Activated naive CD4-positive, alpha-beta T cell treated with anti-CD3 and anti-CD28 coated beads for 36 hours (primary cell): ENCODE measurements at regions of chr2 and their contacts with region 1.

Region 1: GRCh38 chr2:60806988-60807681 is 51.1 kb downstream of the PAPOLG start:
- DNase-seq: peak; percentile 85
- H3K4me3 Mint-ChIP-seq: peak overlapping the region; percentile 28
- H3K27ac Mint-ChIP-seq: peak overlapping the region; percentile 90
- H3K4me1 Mint-ChIP-seq: peaks cover 48% of the 10 kb centered on the region
- H3K27me3 Mint-ChIP-seq: no peaks in the 10 kb centered on the region

Region 2: DNA sequence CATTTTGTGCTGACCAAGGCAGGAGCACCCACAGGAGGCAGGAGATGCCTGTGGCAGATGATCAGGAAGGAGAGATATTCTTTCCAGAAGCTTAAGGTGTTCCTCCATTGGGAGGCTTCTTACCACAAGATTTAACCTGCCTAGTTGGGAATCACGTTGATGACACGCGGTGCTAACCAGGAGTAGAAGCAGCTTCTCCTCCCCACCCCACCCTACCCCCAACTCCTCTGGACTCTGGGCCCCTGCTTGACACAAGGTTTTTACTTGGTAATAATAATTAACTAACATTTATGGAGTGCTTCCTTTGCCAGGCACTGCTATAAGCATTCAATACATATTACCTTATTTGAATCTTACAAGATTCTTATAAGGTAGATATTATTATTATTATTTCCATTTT is 113.6 kb before region 1 on chr2:
- CTCF ChIA-PET with region 1: no interaction called
- intact Hi-C with region 1: no loop called
- DNase-seq: no peak
- H3K4me3 Mint-ChIP-seq: no peak overlapping the region
- H3K27ac Mint-ChIP-seq: no peak overlapping the region
- H3K4me1 Mint-ChIP-seq: no peaks in the 10 kb centered on the region
- H3K27me3 Mint-ChIP-seq: peaks cover 2% of the 10 kb centered on the region

Region 3: GRCh38 chr2:60756191-60757041 is 50.7 kb before region 1 on chr2 and contains the start of gene PAPOLG:
- CTCF ChIA-PET with region 1: no interaction called
- intact Hi-C with region 1: loop called (anchors 2 kb)
- DNase-seq: peak; percentile 99
- H3K4me3 Mint-ChIP-seq: peak within 1 kb of the TSS; percentile 99
- H3K27ac Mint-ChIP-seq: peak within 1 kb of the TSS; percentile 97
- H3K4me1 Mint-ChIP-seq: peaks cover 40% of the 10 kb centered on the region
- H3K27me3 Mint-ChIP-seq: no peaks in the 10 kb centered on the region
- total RNA-seq, gene PAPOLG: 14.1 to 16.1 TPM

Region 4: DNA sequence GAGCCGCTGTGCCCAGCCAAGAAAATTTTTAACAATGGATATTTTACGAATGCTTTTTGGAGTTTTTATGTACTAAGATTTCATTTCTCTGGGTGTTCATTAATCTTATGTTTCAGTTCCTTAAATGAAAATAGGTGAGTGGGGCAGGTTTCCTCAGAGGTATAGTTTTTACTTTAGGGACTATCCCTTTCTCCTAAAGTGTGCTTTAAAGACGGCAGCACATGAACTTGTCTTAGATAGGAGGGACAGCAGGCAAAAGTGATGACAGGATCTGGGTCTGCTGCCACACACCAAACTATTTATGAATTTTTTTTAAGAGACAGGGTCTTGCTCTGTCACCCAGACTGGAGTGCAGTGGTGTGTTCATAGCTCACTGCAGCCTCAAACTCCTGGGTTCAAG is 66.2 kb after region 1 on chr2:
- CTCF ChIA-PET with region 1: interaction called, 3 read pairs
- intact Hi-C with region 1: loop called (anchors 1 kb)
- DNase-seq: peak; percentile 51
- H3K4me3 Mint-ChIP-seq: no peak overlapping the region
- H3K27ac Mint-ChIP-seq: peak overlapping the region; percentile 69
- H3K4me1 Mint-ChIP-seq: peaks cover 32% of the 10 kb centered on the region
- H3K27me3 Mint-ChIP-seq: no peaks in the 10 kb centered on the region

Region 5: DNA sequence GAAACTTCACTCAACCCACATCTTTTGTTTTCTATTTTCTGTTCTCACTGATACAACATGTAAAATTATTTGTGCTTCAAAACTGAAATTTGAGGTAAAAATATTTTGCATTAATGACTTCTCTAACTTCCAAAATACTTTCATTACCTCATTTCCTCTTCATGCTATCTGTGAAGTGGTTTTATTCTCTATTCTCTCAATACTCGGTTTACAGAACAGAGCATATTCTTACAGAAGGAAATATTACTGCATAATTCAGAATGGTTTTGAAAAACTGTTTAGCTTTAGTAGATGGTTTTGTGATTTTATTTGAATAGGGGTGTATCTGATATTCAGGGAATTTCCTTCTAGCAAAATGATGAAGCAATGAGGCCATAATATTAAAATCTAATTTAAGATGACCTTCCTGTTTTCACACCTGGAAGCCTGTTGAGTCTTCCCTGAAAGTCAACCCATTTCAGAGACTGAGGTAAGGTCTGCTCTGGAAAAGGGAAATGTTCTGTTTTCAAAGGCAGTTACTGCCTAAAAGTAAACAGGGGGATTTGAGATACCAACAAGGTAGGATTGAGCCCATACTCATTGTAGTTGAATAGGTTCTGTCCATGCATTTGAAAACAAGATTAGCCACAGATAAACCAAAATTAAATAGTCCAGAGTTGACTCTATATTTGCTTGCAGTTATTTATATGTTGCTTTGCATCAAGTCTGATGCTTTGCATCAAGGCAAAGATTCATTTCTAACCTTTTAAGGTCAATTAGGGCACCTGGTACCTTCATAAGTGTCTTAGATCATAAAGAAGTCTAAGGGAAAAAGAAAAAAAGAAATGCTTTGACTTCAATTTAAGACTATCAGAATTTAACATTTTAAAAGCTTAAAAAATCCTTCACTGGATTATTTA is 159.6 kb after region 1 on chr2:
- CTCF ChIA-PET with region 1: interaction called, 7 read pairs
- intact Hi-C with region 1: loop called (anchors 1 kb)
- DNase-seq: no peak
- H3K4me3 Mint-ChIP-seq: peak overlapping the region; percentile 11
- H3K27ac Mint-ChIP-seq: peak overlapping the region; percentile 62
- H3K4me1 Mint-ChIP-seq: peaks cover 62% of the 10 kb centered on the region
- H3K27me3 Mint-ChIP-seq: no peaks in the 10 kb centered on the region

Region 6: GRCh38 chr2:61006486-61007105 is 199.5 kb after region 1 on chr2:
- CTCF ChIA-PET with region 1: interaction called, 11 read pairs
- intact Hi-C with region 1: no loop called
- DNase-seq: no peak
- H3K4me3 Mint-ChIP-seq: no peak overlapping the region
- H3K27ac Mint-ChIP-seq: no peak overlapping the region
- H3K4me1 Mint-ChIP-seq: no peaks in the 10 kb centered on the region
- H3K27me3 Mint-ChIP-seq: no peaks in the 10 kb centered on the region

Region 7: DNA sequence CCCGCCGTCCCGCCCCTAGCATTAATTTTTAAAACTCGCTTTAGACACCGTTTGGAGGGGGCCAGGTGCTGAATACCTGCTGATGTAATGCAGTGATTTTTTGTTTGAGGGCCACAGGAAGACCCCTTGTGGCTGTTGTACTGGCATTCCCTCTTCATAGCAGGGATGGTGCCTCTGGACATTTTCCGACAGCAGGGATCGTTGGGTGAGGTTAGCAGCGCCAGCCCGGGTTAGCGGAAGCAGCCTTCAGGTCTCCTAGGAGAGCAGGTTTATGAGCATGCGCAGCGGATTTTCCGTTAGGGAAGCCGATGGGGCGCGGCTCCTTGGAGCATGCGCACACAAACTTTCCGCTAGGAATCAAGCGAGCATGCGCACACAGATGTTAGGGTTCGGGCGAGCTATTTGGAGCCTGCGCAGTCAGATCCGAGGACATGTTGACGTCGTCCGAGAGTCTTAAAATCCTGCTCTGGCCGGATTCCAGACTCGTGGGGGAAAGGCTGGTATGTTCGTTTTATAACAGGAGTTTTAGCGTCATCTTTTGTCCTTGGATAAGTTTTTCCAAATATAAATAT is 337.6 kb after region 1 on chr2:
- CTCF ChIA-PET with region 1: no interaction called
- intact Hi-C with region 1: loop called (anchors 5 kb)
- DNase-seq: peak; percentile 97
- H3K4me3 Mint-ChIP-seq: peak overlapping the region; percentile 92
- H3K27ac Mint-ChIP-seq: peak overlapping the region; percentile 85
- H3K4me1 Mint-ChIP-seq: peaks cover 6% of the 10 kb centered on the region
- H3K27me3 Mint-ChIP-seq: no peaks in the 10 kb centered on the region

Region 8: DNA sequence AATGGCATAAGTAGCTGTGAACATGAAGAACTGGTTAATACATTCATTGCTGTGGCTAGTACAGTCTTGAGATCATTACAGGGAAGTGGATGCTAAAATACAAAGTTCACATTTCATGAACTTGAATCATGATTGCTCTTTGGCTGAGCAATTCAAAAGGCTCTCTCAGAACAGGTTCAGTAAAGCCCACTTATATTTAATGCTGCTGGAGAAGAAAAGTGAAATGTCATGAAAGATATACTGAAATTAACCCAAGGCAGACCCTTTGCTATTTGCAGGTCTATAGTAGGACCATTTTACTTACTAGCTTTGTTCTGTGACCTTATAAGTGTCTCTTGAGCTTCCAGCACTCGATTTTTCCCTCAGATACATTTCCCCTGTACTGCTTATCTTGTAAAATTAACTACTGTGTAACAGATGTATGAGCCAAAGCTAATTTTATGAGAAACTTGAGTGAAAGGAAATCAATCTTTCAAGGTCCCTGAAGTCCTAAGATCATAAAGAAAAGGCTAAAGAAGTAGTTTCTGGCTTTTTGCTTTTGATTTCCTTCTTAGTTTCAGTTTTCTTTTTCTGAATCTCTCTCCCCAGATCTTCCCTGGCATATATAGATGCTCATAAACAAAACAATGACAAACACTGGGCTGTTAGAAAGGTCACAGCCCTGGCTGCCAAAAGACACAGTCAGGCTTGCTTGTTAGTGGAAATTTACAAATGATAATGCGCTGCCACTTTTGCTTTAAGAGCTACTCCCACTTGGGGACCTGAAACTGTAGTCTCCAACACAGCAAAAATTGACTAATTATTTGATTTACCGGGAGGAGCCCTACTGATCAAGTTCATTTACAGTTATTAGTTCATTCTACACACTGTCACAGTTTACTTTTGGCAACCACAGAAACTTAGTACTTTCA is 863.7 kb after region 1 on chr2:
- CTCF ChIA-PET with region 1: no interaction called
- intact Hi-C with region 1: loop called (anchors 10 kb)
- DNase-seq: peak; percentile 51
- H3K4me3 Mint-ChIP-seq: peak overlapping the region; percentile 10
- H3K27ac Mint-ChIP-seq: peak overlapping the region; percentile 57
- H3K4me1 Mint-ChIP-seq: peaks cover 17% of the 10 kb centered on the region
- H3K27me3 Mint-ChIP-seq: no peaks in the 10 kb centered on the region